ENCODE measurements at regions of chr12 and their contacts with region 1.

Region 1: DNA sequence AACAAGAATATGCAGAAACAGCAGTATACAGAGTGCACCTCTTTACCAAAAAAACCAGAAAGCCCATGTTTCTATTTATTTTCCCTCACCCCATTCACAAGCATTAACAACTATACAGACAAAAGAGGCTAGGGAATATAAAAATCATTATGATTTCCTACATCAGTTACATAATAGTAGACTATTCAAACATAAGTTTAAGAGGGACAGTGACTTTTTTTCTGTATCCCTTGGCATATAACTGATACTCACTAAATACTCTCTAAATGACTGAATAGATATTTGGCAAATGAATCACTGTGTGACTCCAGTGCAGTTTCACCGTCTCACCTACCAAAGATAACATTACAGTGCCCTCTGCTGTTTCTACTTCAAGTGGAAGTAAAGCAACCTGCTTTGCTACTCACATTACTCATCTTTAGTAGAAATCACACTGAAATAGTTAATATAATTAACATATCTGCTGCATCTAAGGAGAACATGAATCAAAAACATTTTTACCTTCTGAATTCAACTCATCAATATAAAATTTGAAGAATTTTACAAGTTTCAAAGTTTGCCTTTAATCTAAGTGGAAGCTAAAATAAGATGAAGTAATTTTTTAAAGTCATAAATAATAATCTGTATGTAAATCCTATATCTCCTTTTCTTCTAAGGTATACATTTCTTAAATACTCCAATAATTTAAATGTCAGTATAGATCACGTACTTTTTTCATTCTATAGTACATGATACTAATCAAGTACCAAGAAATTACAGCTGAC is 103.8 kb downstream of the OSBPL8 start:
- DNase-seq: peak in 6 of 9 donors; percentile 15 to 49 (median 38)
- ATAC-seq: peak; percentile 78
- H3K4me3 ChIP-seq: no peak overlapping the region
- H3K4me3 Mint-ChIP-seq: peak overlapping the region in 1 of 10 donors; percentile 38
- H3K27ac ChIP-seq: no peak overlapping the region
- H3K27ac Mint-ChIP-seq: peak overlapping the region in 3 of 9 donors; percentile 36 to 65 (median 46)
- H3K4me1 ChIP-seq: peaks cover 14 to 16% of the 10 kb centered on the region in 2 donors
- H3K4me1 Mint-ChIP-seq: peaks cover 10 to 58% (median 37%) of the 10 kb centered on the region in 7 donors
- H3K27me3 ChIP-seq: no peaks in the 10 kb centered on the region
- H3K27me3 Mint-ChIP-seq: no peaks in the 10 kb centered on the region

Region 2: DNA sequence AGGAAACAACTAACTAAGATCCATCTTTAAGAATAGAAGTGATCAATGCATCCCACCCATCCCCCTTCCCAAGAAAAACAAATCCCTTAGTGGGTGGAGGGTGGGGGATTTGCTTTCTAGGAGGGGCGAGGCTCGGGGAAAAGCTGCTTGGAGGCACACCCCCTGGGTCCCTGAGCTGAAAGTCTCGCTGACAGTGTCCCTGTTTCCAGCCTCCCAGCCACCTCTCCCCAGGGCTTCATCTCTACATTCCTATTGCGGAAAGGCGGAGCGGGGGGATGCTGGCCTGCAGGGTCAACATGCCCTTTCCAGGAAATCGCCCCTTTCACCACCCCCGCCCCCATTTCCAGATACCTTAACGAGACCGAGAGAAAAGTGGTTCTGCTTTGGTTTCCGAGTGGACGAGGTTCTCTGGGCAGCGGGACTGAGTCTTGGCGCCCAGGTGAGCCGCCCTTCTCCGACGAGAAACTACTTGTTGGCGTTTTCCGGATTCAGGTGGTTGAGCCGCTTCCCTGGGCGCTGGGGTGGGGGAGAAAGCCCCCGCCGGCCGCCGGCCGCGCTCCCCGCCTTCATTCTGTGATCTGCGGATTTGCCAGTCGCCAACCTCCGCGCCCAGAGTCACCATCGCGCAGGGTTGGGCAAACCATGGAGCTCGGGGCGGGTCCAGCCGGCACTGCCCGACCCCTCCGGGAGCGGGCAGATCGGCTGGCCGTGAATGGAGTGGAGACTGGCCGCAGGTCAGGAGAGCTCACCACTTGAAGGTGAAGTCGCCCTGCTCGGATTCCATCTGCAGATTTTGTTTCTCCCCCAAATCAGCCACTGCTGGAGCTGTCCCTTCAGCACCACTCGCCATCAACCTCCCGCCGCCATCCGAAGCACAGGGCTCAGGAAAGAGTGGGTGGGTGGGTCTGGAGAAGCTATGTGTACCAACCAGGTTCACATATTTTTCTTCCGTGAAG is 1246.6 kb before region 1 on chr12:
- CTCF ChIA-PET with region 1: no interaction called
- POLR2A ChIA-PET with region 1: no interaction called
- intact Hi-C with region 1: no loop called
- DNase-seq: peak in 2 of 9 donors; percentile 18 to 27
- ATAC-seq: peak; percentile 18
- H3K4me3 ChIP-seq: no peak overlapping the region
- H3K4me3 Mint-ChIP-seq: peak overlapping the region in 3 of 10 donors; percentile 6 to 61 (median 6)
- H3K27ac ChIP-seq: no peak overlapping the region
- H3K27ac Mint-ChIP-seq: no peak overlapping the region
- H3K4me1 ChIP-seq: no peaks in the 10 kb centered on the region
- H3K4me1 Mint-ChIP-seq: peaks cover 0 to 17% (median 13%) of the 10 kb centered on the region in 7 donors
- H3K27me3 ChIP-seq: peaks cover 0 to 12% of the 10 kb centered on the region in 2 donors
- H3K27me3 Mint-ChIP-seq: peaks cover 50 to 63% (median 52%) of the 10 kb centered on the region in 5 donors

Region 3: GRCh38 chr12:75511116-75512048 is 944.4 kb before region 1 on chr12 and contains the start of gene KRR1:
- CTCF ChIA-PET with region 1: no interaction called
- POLR2A ChIA-PET with region 1: no interaction called
- intact Hi-C with region 1: loop called in 1 of 2 experiments (anchors 5 kb)
- DNase-seq: peak; percentile 60 to 93 (median 90)
- ATAC-seq: peak; percentile 98
- H3K4me3 ChIP-seq: peak within 1 kb of the TSS; percentile 90
- H3K4me3 Mint-ChIP-seq: peak within 1 kb of the TSS; percentile 96 to 100 (median 99)
- H3K27ac ChIP-seq: peak within 1 kb of the TSS; percentile 89
- H3K27ac Mint-ChIP-seq: peak within 1 kb of the TSS; percentile 96 to 100 (median 99)
- H3K4me1 ChIP-seq: peaks cover 13% of the 10 kb centered on the region in 2 donors
- H3K4me1 Mint-ChIP-seq: peaks cover 15 to 47% (median 38%) of the 10 kb centered on the region in 7 donors
- H3K27me3 ChIP-seq: no peaks in the 10 kb centered on the region
- H3K27me3 Mint-ChIP-seq: no peaks in the 10 kb centered on the region
- total RNA-seq, gene KRR1: 69.3 to 120 (median 74.3) TPM

Region 4: GRCh38 chr12:76037130-76038103 is 418.3 kb before region 1 on chr12:
- CTCF ChIA-PET with region 1: no interaction called
- POLR2A ChIA-PET with region 1: no interaction called
- intact Hi-C with region 1: loop called in 1 of 2 experiments (anchors 5 kb)
- DNase-seq: peak in 7 of 9 donors; percentile 46 to 63 (median 55)
- ATAC-seq: peak; percentile 87
- H3K4me3 ChIP-seq: no peak overlapping the region
- H3K4me3 Mint-ChIP-seq: no peak overlapping the region
- H3K27ac ChIP-seq: no peak overlapping the region
- H3K27ac Mint-ChIP-seq: peak overlapping the region in 1 of 9 donors; percentile 1
- H3K4me1 ChIP-seq: peaks cover 0 to 4% of the 10 kb centered on the region in 2 donors
- H3K4me1 Mint-ChIP-seq: peaks cover 5 to 29% (median 12%) of the 10 kb centered on the region in 7 donors
- H3K27me3 ChIP-seq: no peaks in the 10 kb centered on the region
- H3K27me3 Mint-ChIP-seq: no peaks in the 10 kb centered on the region

Region 5: DNA sequence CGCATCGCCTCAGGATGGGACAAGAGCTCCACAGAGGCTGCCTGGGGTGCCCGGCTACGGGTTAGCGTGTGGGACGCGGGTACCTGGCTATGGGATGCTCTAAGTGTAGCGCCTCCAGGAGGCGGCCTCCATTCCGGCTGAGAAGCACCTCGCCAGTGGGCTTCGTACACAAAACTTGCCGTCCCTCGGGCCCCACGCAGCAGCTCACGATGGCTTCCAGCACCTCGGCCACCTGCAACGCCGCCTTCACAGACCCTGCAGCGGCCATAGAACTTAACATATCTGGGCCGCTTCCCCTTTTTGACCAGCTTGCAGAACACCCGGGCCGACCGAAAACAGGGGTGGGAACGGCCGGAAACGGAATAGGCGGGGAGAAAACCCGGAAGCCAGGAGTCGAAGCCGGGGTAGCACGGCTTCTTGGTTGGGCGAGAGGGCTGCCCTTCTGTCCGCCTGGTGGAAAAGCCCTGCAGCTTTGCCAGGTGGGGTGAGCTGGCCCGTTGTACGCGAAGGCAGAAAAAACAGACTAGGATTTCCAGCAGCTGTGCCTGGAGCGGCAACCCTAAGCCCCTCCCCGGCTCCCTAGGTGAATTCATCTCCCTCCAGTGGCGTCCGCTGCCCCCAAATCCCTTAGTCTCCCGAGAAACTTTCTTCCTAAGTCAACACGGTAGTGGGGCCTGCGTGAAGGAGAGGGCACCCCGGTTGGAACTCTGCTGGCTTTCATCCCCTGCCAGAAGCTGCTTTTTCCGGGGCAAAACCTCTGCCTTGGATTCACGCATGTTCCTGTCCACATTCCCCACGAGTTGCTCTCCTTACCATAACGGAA is 107.5 kb before region 1 on chr12 and contains the start of gene BBS10:
- CTCF ChIA-PET with region 1: no interaction called
- POLR2A ChIA-PET with region 1: no interaction called
- intact Hi-C with region 1: loop called in 1 of 2 experiments (anchors 5 kb)
- DNase-seq: peak; percentile 64 to 86 (median 84)
- ATAC-seq: peak; percentile 97
- H3K4me3 ChIP-seq: peak within 1 kb of the TSS; percentile 88
- H3K4me3 Mint-ChIP-seq: peak within 1 kb of the TSS; percentile 89 to 98 (median 96)
- H3K27ac ChIP-seq: peak within 1 kb of the TSS; percentile 79
- H3K27ac Mint-ChIP-seq: peak within 1 kb of the TSS; percentile 85 to 95 (median 93)
- H3K4me1 ChIP-seq: peaks cover 16 to 20% of the 10 kb centered on the region in 2 donors
- H3K4me1 Mint-ChIP-seq: peaks cover 15 to 48% (median 30%) of the 10 kb centered on the region in 7 donors
- H3K27me3 ChIP-seq: no peaks in the 10 kb centered on the region
- H3K27me3 Mint-ChIP-seq: no peaks in the 10 kb centered on the region
- total RNA-seq, gene BBS10: 2.5 to 11.5 (median 5.2) TPM

Region 6: DNA sequence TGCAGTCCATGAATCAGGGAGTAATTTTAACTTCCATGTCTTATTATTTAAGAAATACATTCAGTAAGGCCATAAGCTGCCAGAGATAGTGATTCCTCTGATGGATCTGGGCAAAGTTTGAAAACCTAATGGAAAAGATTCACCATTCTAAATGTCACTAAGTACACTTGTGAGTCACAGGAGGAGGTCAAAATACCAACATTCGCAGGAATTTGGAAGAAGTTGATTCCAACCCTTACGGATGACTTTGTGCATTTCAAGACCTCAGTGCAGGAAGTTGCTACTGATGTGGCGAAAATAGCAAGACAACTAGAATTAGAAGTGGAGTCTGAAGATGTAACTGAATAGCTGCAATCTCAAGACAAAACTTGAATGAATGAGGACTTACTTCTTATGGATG is 34.0 kb after region 1 on chr12:
- CTCF ChIA-PET with region 1: no interaction called
- POLR2A ChIA-PET with region 1: no interaction called
- intact Hi-C with region 1: no loop called
- DNase-seq: no peak
- ATAC-seq: no peak
- H3K4me3 ChIP-seq: no peak overlapping the region
- H3K4me3 Mint-ChIP-seq: peak overlapping the region in 2 of 10 donors; percentile 21 to 28
- H3K27ac ChIP-seq: no peak overlapping the region
- H3K27ac Mint-ChIP-seq: peak overlapping the region in 3 of 9 donors; percentile 1 to 40 (median 8)
- H3K4me1 ChIP-seq: no peaks in the 10 kb centered on the region
- H3K4me1 Mint-ChIP-seq: peaks cover 11 to 60% (median 39%) of the 10 kb centered on the region in 7 donors
- H3K27me3 ChIP-seq: no peaks in the 10 kb centered on the region
- H3K27me3 Mint-ChIP-seq: no peaks in the 10 kb centered on the region

Measured in naive thymus-derived CD4-positive, alpha-beta T cell (primary cell).